Posterior vena cava (tissue), 2 donors: ENCODE measurements at regions of chr1 and their contacts with region 1.

Region 1: DNA sequence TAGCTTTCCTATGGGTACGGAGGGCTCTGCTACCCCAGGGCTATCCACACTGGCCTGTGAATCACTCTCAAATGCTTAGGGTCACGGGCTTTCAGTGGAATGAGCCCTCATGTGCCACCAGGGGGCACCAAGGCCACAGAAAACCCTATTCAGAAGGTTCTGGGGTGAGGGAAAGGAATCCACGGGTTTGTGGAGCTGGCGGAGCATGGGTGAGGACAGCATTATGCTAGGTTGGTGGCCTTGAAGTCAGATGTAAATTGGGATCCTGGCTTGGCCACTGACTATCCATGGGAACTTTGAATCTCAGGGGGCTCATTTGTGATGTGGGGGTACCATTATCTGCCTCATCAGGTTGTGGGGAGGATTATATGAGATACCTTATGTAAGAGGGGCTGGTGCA is 5.1 kb upstream of the LAMTOR5 start:
- DNase-seq: peak; percentile 91

Region 2: GRCh38 chr1:110460253-110461220 is 48.0 kb after region 1 on chr1:
- intact Hi-C with region 1: loop called in 1 of 2 experiments (anchors 5 kb)
- DNase-seq: peak; percentile 83